Activated CD4-positive, alpha-beta T cell treated with anti-CD3 and anti-CD28 coated beads for 36 hours (primary cell): ENCODE measurements at regions of chr3 and their contacts with region 1.

Region 1: DNA sequence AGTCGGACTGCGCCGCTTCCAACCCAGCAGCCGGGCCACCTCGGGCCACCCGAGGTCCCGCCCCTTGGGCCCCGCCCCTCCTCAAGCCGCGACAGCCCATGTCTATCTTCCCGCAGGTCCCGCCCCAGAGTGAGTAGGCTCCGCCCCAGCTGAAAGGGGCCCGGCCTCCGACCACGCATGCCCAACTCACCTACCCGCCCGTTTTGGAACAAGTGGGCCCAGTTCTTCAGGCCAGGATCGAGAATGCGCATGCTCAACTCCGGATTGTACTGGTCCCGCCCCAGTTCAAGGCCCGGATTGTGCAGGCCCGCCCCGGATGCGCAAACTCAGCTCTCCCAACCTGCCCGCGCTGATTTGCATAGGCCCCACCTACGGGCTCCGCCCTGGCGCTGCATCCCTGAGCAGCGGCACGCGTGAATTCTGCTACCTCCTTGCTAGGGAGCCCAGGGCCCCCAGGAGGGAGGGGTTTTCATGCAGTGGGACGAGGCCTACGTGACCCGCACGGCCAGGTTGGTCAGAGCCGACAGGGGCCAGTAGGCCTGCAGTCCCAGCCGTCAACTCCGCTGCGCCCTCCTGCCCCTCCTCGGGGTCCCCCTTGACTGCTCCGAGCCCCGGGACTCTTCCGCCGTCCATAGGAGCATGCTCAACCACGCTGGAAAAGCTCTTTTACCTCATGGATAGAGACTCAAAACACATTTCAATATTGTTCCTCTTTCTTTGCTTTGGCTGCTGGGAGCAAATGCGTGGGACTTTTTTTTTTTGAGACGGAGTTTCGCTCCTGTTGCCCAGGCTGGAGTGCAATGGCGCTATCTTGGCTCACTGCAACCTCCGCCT is at the start of gene PFKFB4:
- DNase-seq: peak; percentile 100
- ATAC-seq: peak; percentile 91
- H3K4me3 Mint-ChIP-seq: peak within 1 kb of the TSS; percentile 87
- H3K27ac Mint-ChIP-seq: peak within 1 kb of the TSS; percentile 93
- H3K4me1 Mint-ChIP-seq: peaks cover 23% of the 10 kb centered on the region
- H3K27me3 Mint-ChIP-seq: no peaks in the 10 kb centered on the region
- total RNA-seq, gene PFKFB4: 58.4 to 63.7 TPM

Region 2: DNA sequence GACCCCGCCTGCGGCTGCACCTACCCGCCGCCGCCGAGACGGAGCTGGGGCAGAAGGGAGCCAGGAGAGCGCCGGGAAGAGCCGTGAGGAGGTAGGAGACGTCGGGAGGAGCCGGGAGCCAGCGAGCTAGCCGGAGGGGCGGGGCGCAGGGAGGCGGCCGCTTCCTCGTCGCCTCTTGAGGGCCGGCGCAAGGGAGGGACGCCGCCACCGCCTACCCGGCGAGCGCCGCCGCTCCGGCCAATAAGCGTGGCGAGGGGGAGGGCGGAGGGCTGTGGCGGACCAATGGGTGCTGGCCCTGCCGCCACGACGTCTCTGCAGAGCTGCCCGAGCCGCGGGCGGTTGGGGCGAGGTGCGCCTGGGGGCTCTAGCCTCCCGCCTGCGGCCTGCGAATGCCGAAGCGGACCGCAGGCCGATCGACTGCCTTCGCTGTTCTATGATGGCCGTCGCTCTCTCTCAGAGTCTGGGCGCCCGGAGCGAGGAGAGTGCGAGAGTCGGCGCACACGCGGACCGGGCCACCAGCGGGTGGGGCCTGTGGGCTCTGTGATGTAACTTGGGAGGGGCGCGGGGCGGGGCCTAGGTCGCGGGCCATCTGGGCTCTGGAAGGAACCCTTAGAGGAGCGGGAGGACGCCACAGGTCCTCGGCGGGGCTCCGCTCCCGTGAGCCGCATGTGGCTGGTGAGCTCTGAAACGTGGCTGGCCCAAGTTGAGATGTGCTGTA is 468.1 kb before region 1 on chr3:
- CTCF ChIA-PET with region 1: no interaction called
- POLR2A ChIA-PET with region 1: no interaction called
- intact Hi-C with region 1: loop called in 1 of 2 experiments (anchors 1 kb)
- DNase-seq: peak; percentile 97
- ATAC-seq: peak; percentile 96
- H3K4me3 Mint-ChIP-seq: peak overlapping the region; percentile 97
- H3K27ac Mint-ChIP-seq: peak overlapping the region; percentile 93
- H3K4me1 Mint-ChIP-seq: peaks cover 29% of the 10 kb centered on the region
- H3K27me3 Mint-ChIP-seq: no peaks in the 10 kb centered on the region

Region 3: DNA sequence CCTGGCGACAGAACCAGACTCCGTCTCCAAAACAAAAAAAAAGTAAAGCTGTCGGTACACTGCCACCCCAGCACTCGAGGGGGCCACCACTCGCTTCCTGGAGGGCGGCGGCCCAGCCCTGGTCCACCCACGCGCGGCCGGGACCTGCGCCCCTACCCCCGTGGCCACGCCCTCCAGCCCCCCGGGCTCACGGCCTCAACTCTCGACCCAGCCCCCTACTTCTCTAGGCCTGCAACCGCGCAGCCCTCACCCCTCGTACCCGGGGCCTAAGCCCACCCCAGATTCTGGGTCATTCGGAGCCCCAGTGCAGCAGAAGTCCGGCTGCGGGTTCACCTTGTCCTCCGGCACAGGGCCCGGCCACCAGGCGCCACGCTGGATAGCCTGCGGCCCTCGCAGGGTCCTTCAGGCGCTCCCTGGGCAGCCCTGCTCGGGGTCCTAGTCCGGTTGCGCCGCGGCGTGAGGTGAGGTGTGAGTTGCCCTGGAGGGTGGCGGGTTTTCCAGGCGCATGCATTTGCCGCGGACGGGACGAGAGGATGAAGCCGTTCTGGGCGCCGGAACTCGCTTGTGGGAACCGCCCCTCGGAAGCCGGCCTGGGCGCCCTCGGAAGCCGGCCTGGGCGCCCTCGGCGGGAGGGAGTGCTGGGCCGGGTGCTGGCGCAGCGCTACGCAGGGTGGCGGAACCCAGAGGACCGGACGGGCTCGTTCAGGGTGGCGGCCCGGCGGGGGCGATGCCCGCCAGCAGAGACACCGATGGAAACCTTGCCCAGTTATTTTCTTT is 255.8 kb before region 1 on chr3:
- CTCF ChIA-PET with region 1: no interaction called
- POLR2A ChIA-PET with region 1: interaction called, 3 read pairs
- intact Hi-C with region 1: loop called (anchors 1 to 10 kb)
- DNase-seq: peak; percentile 97
- ATAC-seq: peak; percentile 85
- H3K4me3 Mint-ChIP-seq: peak within 1 kb of the TSS; percentile 92
- H3K27ac Mint-ChIP-seq: peak within 1 kb of the TSS; percentile 98
- H3K4me1 Mint-ChIP-seq: peaks cover 27% of the 10 kb centered on the region
- H3K27me3 Mint-ChIP-seq: no peaks in the 10 kb centered on the region

Region 4: DNA sequence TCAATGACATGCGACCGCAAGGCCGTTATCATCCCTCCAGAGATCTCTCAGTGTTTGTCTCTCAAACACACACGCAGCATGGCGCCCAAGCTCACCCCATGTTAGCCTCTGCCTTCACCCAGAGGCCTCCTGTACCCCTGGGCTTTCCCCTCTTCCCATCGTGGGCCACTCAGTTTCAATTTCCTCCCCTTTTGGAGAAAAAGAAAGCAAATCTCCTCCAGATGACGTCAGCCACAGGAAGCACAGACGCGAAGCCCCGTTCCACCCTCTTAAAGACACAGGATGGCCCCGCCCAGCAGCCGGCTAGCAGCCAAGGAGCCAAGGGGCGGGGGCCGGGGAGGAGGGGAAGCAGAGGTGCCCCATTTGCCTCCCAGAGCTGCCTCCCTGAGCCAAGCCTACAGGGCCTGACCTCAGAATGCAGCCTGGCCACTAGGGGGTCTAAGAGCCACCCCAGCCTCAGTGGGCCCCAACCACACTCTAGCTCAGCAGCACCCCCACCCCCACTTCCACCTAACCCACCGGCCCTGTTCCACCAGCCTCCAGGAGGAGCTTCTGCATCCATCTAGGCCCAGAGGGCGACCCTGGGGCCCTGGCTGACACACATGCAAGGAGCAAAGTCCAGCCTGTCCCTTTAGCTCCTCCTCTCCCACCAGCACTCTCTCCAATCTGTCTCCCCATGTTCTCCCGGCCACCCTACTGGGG is 83.9 kb before region 1 on chr3:
- CTCF ChIA-PET with region 1: interaction called, 24 read pairs
- POLR2A ChIA-PET with region 1: interaction called, 4 read pairs
- intact Hi-C with region 1: loop called (anchors 1 kb)
- DNase-seq: peak; percentile 99
- ATAC-seq: peak; percentile 90
- H3K4me3 Mint-ChIP-seq: peak overlapping the region; percentile 74
- H3K27ac Mint-ChIP-seq: peak overlapping the region; percentile 93
- H3K4me1 Mint-ChIP-seq: peaks cover 49% of the 10 kb centered on the region
- H3K27me3 Mint-ChIP-seq: no peaks in the 10 kb centered on the region

Region 5: DNA sequence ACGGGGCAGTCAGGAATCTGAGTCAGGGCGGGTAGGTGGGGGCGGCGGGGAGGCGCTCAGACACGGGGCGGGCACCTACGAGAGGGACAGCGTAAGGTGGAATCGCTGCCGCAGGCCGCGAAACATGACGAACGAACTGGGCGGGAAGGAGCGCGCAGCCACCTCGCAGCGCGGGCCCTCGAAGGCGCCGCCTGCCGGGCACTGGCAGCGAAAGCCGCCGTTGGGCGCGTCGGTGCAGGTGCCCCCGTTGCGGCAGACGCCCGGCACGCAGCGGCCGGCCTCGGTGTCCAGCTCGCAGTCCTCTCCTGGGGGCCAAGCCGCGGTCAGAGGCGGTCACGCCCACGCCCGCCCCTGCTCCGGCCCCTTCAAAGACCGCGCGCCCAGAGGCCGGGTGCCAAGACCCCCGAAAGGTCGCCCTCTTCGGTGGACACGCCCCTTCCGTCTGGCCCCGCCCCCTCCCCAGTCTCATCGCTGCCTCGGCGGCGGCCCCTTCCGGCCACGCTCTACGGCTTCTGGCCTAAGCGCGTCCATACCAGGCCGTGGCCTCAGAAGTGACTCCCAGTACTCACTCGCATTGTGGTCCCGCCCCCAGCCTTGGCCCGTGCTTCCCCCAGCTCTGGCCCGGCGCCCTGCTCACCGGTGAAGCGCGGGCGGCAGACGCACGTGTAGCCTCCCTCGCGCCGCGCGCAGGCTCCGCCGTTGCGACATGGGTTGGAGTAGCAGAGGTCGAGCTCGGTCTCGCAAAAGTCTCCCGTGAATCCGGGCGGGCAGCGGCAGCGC is 99.2 kb after region 1 on chr3:
- CTCF ChIA-PET with region 1: interaction called, 3 read pairs
- POLR2A ChIA-PET with region 1: no interaction called
- intact Hi-C with region 1: loop called (anchors 1 to 5 kb)
- DNase-seq: peak; percentile 94
- ATAC-seq: peak; percentile 83
- H3K4me3 Mint-ChIP-seq: peak overlapping the region; percentile 71
- H3K27ac Mint-ChIP-seq: peak overlapping the region; percentile 87
- H3K4me1 Mint-ChIP-seq: peaks cover 6% of the 10 kb centered on the region
- H3K27me3 Mint-ChIP-seq: peaks cover 16% of the 10 kb centered on the region

Region 6: DNA sequence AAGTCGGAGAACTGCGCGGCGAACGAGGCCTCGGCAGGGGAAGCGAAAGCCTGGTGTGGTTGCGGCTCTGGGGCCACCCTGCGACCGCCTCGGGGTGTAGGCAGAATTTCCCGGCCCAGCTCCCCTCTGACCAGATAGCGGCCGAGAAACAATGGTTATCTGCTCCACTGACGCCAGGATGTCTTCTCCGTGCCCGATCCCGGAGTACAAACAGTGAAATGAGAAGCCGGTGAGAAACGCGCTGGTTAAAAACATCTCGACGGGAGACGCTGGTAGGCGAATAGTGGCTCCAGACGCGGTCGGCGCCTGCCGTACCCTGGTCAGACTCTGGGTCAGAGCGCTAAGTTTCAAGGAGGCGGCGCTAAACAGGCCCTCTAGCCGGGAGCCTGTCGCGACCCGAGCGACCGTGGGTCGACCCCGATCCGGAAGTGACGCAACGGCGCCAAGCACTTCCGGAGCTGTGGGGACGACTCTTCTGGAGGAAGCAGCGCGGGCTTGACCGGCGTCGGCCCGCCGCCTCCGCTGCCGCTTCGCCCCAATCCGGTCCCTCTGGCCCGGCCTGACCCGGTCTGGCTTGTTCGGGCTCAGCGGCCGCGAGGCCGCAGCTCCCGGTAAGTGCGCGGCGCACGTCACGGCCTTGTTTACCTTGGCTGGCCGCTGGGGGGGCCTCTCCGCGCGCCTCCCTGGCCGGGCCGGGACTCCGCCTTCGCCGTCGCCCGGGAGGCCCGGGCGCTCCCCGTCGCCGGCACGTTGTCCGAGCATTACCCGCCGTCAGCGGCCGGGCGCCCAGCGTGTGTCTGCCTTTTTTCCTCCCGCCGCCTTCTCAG is 361.6 kb after region 1 on chr3 and contains the start of gene ARIH2:
- CTCF ChIA-PET with region 1: no interaction called
- POLR2A ChIA-PET with region 1: no interaction called
- intact Hi-C with region 1: loop called in 1 of 2 experiments (anchors 5 kb)
- DNase-seq: peak; percentile 94
- ATAC-seq: peak; percentile 75
- H3K4me3 Mint-ChIP-seq: peak within 1 kb of the TSS; percentile 90
- H3K27ac Mint-ChIP-seq: peak within 1 kb of the TSS; percentile 100
- H3K4me1 Mint-ChIP-seq: peaks cover 30% of the 10 kb centered on the region
- H3K27me3 Mint-ChIP-seq: no peaks in the 10 kb centered on the region
- total RNA-seq, gene ARIH2: 105 to 112 TPM